IMR-90 (cell line): ENCODE measurements at regions of chr9 and their contacts with region 1.

Region 1: DNA sequence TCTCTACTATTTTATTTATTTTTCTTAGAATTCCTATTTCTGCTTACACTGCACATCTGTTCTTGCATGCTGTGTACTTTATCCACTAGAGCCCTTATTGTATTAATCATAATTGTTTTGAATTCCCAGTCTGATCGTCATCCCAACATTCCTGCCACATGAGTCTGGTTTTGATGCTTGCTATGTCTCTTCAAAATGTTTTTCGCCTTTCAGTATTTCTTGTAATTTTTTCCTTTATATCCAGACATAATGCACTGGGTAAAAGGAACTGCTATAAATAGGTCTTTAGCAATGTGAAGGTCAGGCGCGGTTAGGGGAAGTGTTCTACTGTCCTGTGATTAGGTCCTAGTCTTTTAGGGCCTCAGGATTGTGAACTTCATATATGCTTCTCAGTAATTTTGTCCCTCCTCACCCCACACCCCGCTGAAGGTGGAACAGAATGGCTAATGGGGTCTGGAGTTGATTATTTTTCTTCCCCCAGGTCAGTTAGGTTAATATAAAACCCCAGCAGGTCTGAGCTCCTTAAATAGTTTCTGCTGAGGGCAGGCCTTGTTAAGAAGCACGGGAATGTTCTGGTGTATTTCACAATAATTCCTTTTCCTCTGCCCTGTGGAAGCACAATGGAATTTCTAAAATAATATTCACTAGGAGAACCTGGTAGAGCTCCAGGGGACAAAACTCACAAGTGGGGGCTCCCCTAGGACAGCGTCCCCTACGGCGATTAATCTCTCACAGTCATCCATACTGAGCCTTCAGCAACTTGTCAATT is 146.6 kb upstream of the TUT7 start:
- DNase-seq: peak; percentile 97
- ATAC-seq: peak; percentile 93
- H3K4me3 ChIP-seq: no peak overlapping the region
- H3K27ac ChIP-seq: peak overlapping the region; percentile 99
- H3K4me1 ChIP-seq: peaks cover 12% of the 10 kb centered on the region
- H3K27me3 ChIP-seq: no peaks in the 10 kb centered on the region
- CTCF ChIP-seq: no peak
- POLR2A ChIP-seq: no peak
- RAD21 ChIP-seq: no peak

Region 2: DNA sequence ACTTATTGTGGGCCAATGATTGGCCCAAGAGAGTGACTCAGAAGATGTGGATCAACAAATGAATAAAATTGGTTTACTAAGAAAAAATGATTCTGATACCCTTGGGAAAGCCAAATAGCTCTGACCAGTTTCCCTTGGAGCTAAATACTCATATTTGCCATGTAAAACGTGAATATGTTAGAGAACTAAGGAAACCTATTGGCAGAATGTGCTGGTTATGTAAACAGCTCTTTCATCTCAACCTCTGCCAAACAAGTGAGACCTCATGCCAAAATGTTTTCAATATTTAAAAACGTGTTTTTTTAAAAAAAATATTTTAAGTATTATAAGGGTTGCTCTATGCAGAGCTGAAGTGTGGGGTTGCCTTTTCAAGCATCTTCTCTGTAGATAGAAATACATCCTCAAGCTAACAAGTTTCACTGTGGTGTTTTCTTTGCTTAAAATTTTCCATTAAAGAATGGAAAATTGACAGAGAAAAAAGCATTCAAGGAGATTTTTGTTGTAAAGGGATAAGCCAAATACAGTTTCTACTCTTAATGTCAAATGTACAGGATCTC is 40.2 kb after region 1 on chr9:
- CTCF ChIA-PET with region 1: no interaction called
- POLR2A ChIA-PET with region 1: no interaction called
- dilution Hi-C with region 1: no loop called
- in situ Hi-C with region 1: no loop called
- intact Hi-C with region 1: loop called (anchors 5 kb)
- DNase-seq: no peak
- ATAC-seq: no peak
- H3K4me3 ChIP-seq: no peak overlapping the region
- H3K27ac ChIP-seq: no peak overlapping the region
- H3K4me1 ChIP-seq: no peaks in the 10 kb centered on the region
- H3K27me3 ChIP-seq: no peaks in the 10 kb centered on the region
- CTCF ChIP-seq: no peak
- POLR2A ChIP-seq: no peak
- RAD21 ChIP-seq: no peak